ENCODE measurements at regions of chr12 and their contacts with region 1.

Region 1: DNA sequence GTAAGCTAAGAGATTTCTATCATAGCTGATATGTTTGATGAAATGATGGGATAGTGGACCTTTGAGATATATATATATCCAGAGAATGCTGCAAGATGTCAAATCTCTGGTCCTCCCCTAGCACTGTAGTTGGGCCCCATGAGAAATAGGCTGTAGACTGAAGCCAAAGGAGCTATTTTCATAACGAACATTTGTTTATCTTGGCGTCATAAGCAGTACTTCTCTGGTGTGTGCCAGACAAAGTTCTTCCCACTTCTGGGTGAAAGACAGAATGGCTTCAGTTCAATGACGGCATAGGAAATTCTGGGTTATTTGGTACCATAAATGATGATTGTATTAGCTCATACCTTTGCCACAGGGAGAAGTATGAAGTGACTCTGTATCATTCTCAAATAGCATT is 534.3 kb downstream of the SOX5 start:
- ATAC-seq: no peak
- H3K4me3 ChIP-seq: no peak overlapping the region
- H3K27ac ChIP-seq: no peak overlapping the region
- H3K4me1 ChIP-seq: peaks cover 0 to 6% of the 10 kb centered on the region in 2 donors

Region 2: DNA sequence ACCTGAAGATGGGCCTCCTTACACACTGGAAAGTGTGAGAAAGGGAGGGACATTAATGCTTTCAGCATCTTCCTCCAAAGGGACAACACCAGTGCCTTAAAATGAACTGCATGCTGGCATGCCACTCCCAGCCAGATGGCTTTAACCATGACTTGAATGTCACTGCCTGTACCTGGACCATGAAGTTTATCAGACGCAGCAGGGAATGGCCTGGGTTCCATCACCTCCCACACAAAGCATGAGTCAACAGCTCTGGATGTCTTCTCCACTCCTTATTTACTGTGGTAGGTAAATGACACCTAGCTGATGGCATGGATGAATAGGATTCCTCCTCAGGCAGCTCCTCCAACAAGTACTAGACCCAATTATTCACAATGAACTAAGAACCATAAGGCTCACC is 111.4 kb before region 1 on chr12:
- in situ Hi-C with region 1: loop called in 1 of 9 experiments (anchors 25 kb)
- ATAC-seq: no peak
- H3K4me3 ChIP-seq: no peak overlapping the region
- H3K27ac ChIP-seq: no peak overlapping the region
- H3K4me1 ChIP-seq: no peaks in the 10 kb centered on the region

Measured in motor neuron (in vitro differentiated cells).